Brain microvascular endothelial cell (primary cell): ENCODE measurements at regions of chr15 and their contacts with region 1.

Region 1: GRCh38 chr15:67820992-67821783 is 4.1 kb upstream of the SKOR1 start:
- DNase-seq: no peak
- H3K4me3 ChIP-seq: no peak overlapping the region
- H3K27ac ChIP-seq: no peak overlapping the region
- H3K27me3 ChIP-seq: peaks cover 80% of the 10 kb centered on the region
- CTCF ChIP-seq: no peak

Region 2: DNA sequence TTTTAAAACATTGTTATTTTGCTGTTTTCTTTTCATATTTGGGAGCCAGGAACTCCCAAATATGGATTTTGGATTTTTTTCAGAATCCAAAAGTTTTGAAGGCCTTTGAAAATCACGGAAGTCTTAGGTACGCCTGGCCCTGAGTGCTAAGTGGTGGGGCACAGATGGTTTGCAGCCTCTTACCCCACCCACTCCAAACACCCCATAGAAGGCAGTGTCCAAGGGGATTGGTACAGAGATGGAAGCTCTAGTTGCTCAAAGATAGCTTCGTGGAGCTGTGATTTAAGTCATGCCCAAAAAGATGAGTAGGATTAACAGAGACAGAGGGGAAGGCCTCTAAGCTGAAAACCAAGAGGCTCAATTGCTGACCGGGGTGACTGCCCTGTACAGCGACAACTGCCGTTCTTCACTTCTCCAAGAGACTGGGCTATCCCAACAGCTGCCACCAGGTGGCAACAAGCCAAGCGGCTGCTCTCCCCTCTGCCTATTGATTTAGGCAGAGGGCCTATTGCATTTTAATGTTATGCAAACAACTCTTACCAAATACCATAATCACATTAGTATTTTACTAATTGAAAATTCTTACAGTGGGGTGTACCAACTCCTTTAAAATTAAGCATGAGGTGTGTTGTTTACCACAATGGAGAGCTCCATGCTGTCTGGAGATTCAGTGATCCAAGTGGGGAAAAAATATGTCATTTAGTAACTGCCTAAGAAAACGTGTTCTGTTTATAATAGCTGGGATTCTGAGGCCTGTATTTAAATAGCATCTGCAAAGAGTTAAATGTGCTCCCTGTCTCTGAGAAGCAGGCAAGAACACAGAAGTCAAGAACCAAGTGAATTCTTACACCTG is 364.3 kb before region 1 on chr15:
- in situ Hi-C with region 1: loop called (anchors 25 kb)
- DNase-seq: peak; percentile 55
- H3K4me3 ChIP-seq: no peak overlapping the region
- H3K27ac ChIP-seq: no peak overlapping the region
- H3K27me3 ChIP-seq: no peaks in the 10 kb centered on the region
- CTCF ChIP-seq: peak; percentile 98

Region 3: GRCh38 chr15:68298882-68299381 is 477.7 kb after region 1 on chr15:
- in situ Hi-C with region 1: no loop called
- DNase-seq: no peak
- H3K4me3 ChIP-seq: no peak overlapping the region
- H3K27ac ChIP-seq: no peak overlapping the region
- H3K27me3 ChIP-seq: no peaks in the 10 kb centered on the region
- CTCF ChIP-seq: no peak